GM13976 (cell line): ENCODE measurements at regions of chr1 and their contacts with region 1.

Region 1: GRCh38 chr1:196148367-196148970 is 459.8 kb downstream of the KCNT2 start:
- DNase-seq: peak; percentile 22
- CTCF ChIP-seq: peak; percentile 15

Region 2: GRCh38 chr1:196660852-196661251 is 512.4 kb after region 1 on chr1:
- in situ Hi-C with region 1: loop called (anchors 10 kb)
- DNase-seq: peak; percentile 29
- CTCF ChIP-seq: peak; percentile 25